H1 (cell line): ENCODE measurements at regions of chr12 and their contacts with region 1.

Region 1: GRCh38 chr12:119235197-119235750 is 56.5 kb downstream of the HSPB8 start:
- DNase-seq: no peak
- H3K4me3 ChIP-seq: no peak overlapping the region
- H3K27ac ChIP-seq: peak overlapping the region; percentile 5; the same call in 1 of the 2 replicates
- H3K4me1 ChIP-seq: peaks cover 10 to 28% (median 25%) of the 10 kb centered on the region in 4 experiments; a peak in 6 of 7 replicates
- H3K27me3 ChIP-seq: no peaks in the 10 kb centered on the region; a peak in 1 of 7 replicates
- CTCF ChIP-seq: peak; percentile 28 to 68 (median 58)
- EP300 ChIP-seq: no peak
- POLR2A ChIP-seq: no peak
- RAD21 ChIP-seq: peak; percentile 26 to 38; a peak in 2 of 4 replicates

Region 2: DNA sequence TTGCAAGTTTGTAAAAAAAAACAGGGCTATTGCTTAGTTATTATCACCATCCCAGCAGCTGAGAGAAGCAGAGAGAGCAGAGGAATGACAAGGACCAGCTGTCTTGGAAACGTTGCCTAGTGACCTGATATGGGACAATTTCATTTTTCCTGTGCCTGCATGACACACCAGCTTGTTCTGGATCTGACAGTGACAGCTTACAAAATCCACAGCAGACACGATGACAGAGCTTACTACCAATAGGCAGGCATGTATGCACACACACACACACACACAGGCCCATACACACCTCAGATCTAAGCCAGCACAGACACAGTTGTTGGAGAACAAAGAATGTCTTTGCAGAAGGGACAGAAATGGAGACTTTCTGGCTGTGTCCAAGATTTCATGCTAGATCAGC is 31.1 kb before region 1 on chr12:
- CTCF ChIA-PET with region 1: interaction called, 13 read pairs
- POLR2A ChIA-PET with region 1: interaction called, 3 read pairs
- DNase-seq: no peak
- H3K4me3 ChIP-seq: no peak overlapping the region
- H3K27ac ChIP-seq: no peak overlapping the region
- H3K4me1 ChIP-seq: peaks cover 12 to 32% (median 25%) of the 10 kb centered on the region in 4 experiments
- H3K27me3 ChIP-seq: no peaks in the 10 kb centered on the region
- CTCF ChIP-seq: no peak
- EP300 ChIP-seq: no peak
- POLR2A ChIP-seq: no peak
- RAD21 ChIP-seq: no peak

Region 3: DNA sequence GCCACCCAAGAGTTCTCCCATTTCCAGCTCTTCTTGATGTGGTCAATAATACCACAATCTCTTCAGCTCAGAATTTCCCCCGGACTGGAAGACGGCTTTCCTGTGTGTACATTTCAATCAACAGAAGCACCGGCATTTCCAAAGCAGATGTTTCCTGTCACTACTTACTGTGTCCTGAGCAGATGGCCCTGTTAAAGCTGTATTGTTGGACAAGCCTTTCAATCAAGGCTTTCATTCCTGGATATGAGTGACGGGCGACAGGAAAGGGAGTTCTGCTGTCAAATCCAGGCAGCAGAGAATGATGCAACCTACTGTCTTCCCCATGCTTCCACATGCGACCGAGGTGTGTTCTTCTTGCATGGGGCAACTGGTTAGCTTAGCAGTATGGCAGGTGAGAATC is 22.9 kb after region 1 on chr12:
- CTCF ChIA-PET with region 1: interaction called, 19 read pairs
- POLR2A ChIA-PET with region 1: no interaction called
- DNase-seq: no peak
- H3K4me3 ChIP-seq: no peak overlapping the region
- H3K27ac ChIP-seq: no peak overlapping the region
- H3K4me1 ChIP-seq: no peaks in the 10 kb centered on the region; a peak in 1 of 7 replicates
- H3K27me3 ChIP-seq: peaks cover 0 to 2% (median 0%) of the 10 kb centered on the region in 4 experiments; a peak in 1 of 7 replicates
- CTCF ChIP-seq: no peak
- EP300 ChIP-seq: no peak
- POLR2A ChIP-seq: no peak
- RAD21 ChIP-seq: no peak